ENCODE measurements at regions of chr7 and their contacts with region 1.

Region 1: DNA sequence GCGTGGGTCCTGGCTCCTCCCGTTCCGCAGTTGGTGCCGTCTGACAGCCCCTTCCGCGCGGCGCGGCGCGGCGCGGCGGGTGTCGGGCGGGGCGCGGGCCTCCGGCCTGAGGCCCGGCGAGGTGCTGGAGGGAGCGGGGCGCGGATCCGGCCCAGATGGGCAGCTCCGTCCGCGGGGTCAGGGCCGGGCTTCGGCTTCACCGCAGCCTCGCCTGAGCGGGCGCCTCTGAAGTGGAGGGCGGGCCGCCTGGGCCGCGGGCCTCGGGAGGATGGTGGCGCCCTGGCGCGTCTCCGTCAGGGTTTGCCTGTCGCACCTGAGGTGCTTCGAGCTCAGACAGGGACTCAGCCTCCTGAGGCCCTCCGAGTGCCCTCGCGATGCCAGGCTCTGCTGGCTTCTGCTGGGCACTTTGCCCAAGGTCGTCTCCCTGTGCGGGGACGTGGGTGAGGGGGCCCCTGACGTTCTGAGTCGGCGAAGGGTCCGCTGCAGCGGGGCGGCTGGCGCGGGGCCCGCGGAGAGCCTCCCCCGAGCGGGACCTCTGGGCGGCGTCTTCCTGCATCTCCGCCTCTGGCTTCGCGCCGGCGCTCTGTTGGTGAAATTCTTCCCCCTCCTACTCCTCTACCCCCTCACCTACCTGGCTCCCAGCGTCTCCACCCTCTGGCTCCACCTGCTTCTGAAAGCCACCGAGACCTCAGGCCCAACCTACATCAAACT is 473 bp downstream of the ADCK2 start:
- DNase-seq: no peak
- ATAC-seq: peak; percentile 62
- H3K4me3 ChIP-seq: peak overlapping the region; percentile 82
- H3K27ac ChIP-seq: peak overlapping the region; percentile 65
- H3K4me1 ChIP-seq: peaks cover 39% of the 10 kb centered on the region
- H3K27me3 ChIP-seq: no peaks in the 10 kb centered on the region
- CTCF ChIP-seq: 0 out of 6 replicates have a peak, but pooled peaks of 1 of the 3 experiments have one; percentile 2
- EP300 ChIP-seq: no peak
- POLR2A ChIP-seq: peak; percentile 31; the same call in 1 of the 2 replicates
- RAD21 ChIP-seq: no peak

Region 2: DNA sequence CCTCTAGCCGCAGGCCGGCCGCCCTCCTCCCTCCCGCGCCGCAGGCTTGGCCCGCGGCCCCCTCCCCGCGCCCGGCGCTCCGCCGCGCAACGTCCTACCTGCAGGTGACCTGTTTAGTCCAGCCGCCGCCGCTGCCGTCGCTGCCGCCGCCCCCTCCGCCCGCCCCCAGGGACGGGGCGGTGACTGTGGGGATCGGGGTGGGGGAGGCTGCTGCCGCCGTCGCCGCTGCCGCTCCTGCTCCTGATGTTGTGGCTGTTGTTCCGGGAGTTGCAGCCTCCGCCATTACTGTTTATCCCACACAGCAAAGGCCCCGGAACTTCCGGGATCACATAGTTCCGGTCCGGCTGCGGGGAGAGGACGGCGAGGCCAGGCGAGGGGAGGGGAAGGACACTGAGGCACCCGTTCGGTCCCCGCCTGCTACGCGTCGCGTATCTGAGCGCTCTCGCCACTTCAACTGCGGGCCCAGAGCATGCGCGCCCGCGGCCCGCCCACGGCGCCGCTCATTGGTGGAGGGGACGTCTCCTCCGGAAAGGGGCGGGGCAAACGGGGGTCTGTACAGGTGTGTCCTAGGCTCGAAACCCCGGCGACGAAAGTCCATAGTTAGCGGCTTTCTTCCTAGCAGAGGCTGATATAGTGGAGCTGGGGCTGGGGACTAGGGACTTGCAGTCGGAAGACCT is 194.0 kb before region 1 on chr7 and contains the start of gene MKRN1:
- CTCF ChIA-PET with region 1: interaction called, 21 read pairs
- POLR2A ChIA-PET with region 1: interaction called, 3 read pairs
- RAD21 ChIA-PET with region 1: interaction called, 7 read pairs
- SMC1A ChIA-PET with region 1: interaction called, 3 read pairs
- in situ Hi-C with region 1: no loop called
- intact Hi-C with region 1: no loop called
- DNase-seq: peak; percentile 83
- ATAC-seq: peak; percentile 96
- H3K4me3 ChIP-seq: peak within 1 kb of the TSS; percentile 98
- H3K27ac ChIP-seq: peak within 1 kb of the TSS; percentile 76
- H3K4me1 ChIP-seq: peaks cover 13% of the 10 kb centered on the region
- H3K27me3 ChIP-seq: no peaks in the 10 kb centered on the region; a peak in 1 of 4 replicates
- CTCF ChIP-seq: no peak
- EP300 ChIP-seq: no peak
- POLR2A ChIP-seq: peak; percentile 85
- RAD21 ChIP-seq: no peak
- polyA plus RNA-seq, gene MKRN1: 19.1 to 23.8 TPM

Region 3: GRCh38 chr7:140541513-140542227 is 131.5 kb before region 1 on chr7:
- CTCF ChIA-PET with region 1: no interaction called
- POLR2A ChIA-PET with region 1: no interaction called
- RAD21 ChIA-PET with region 1: no interaction called
- SMC1A ChIA-PET with region 1: no interaction called
- in situ Hi-C with region 1: no loop called
- intact Hi-C with region 1: no loop called
- DNase-seq: no peak
- ATAC-seq: no peak
- H3K4me3 ChIP-seq: no peak overlapping the region
- H3K27ac ChIP-seq: no peak overlapping the region
- H3K4me1 ChIP-seq: no peaks in the 10 kb centered on the region
- H3K27me3 ChIP-seq: peaks cover 0 to 3% of the 10 kb centered on the region in 2 experiments; a peak in 3 of 4 replicates
- CTCF ChIP-seq: no peak
- EP300 ChIP-seq: no peak
- POLR2A ChIP-seq: no peak
- RAD21 ChIP-seq: no peak

Region 4: DNA sequence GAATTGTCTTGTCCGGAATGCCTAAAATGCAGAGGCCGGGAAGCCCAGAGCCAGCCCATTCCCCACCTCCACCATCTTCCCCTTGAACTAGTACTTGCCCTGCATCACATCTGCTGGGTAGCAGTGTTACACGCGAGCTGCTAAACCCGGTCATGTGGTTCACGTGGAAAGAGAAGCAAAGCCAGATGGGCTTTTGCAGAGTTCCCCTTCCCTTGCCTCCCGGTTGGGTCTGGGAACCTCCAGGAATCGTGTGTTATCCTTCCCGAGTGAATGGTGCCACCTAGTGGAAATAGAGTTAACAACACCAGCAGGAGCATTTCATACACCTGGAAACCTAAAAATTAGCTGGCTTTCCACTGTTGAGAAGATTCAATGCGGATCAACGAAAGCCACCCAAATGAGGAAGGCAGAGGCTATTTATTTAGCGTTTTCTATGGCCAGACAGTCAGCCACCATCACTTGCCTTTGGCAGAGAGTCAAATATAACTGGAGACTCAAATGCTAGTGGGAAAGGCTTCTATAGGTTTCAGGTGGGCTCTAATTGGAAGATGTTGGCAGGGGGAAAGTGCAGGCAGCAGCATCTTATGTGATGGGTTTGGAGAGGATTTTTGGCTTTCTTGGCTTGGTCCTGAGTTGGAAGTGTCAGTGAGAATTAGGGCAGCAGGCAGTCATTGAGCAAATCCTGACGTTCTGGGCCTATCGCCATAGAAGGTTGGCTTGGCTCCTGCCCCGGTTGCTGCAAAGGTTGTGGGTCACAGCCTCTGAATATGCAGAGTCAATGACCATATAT is 19.7 kb before region 1 on chr7:
- CTCF ChIA-PET with region 1: interaction called, 21 read pairs
- POLR2A ChIA-PET with region 1: interaction called, 6 read pairs
- RAD21 ChIA-PET with region 1: interaction called, 4 read pairs
- SMC1A ChIA-PET with region 1: interaction called, 4 read pairs
- in situ Hi-C with region 1: no loop called
- intact Hi-C with region 1: no loop called
- DNase-seq: no peak
- ATAC-seq: peak; percentile 61
- H3K4me3 ChIP-seq: no peak overlapping the region
- H3K27ac ChIP-seq: no peak overlapping the region
- H3K4me1 ChIP-seq: peaks cover 12% of the 10 kb centered on the region
- H3K27me3 ChIP-seq: no peaks in the 10 kb centered on the region
- CTCF ChIP-seq: peak; percentile 79 to 88 (median 81)
- EP300 ChIP-seq: no peak
- POLR2A ChIP-seq: no peak
- RAD21 ChIP-seq: peak; percentile 90

Region 5: DNA sequence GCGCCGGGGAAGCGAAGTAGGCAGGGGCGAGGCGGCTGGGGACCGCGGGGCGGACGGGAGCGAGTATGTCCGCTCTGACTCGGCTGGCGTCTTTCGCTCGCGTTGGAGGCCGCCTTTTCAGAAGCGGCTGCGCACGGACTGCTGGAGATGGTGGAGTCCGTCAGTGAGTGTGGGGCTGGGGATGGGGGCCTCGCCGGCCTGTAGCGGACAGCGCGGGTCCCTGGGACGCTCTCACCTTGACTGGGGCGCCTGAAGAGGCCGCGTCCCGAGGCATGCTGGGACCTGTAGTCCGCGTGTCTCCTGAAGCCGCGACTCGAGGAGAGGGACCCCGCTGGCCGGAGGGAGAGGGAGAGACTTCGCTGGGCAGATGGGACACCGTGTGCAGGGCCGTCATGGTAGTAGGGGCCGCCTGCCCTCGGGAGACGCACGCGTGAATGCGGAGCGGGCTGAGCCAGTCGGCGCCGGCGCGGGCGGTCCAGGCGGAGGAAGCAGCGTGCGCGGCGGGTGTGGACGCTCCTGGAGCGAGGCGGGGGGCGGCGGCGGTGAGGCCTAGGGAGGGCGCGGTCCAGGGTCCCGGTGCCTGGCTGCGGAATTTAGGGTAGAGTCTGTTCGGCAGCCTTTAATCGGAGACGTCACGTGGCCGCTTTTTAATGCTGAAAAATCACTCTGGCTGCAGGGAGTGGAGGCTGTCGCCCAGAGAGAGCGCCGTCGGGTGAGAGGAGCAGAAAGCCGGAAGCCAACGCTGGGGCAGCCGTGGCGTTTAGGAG is 23.6 kb after region 1 on chr7 and contains the start of gene NDUFB2:
- CTCF ChIA-PET with region 1: interaction called, 25 read pairs
- POLR2A ChIA-PET with region 1: interaction called, 11 read pairs
- RAD21 ChIA-PET with region 1: interaction called, 12 read pairs
- SMC1A ChIA-PET with region 1: interaction called, 11 read pairs
- in situ Hi-C with region 1: no loop called
- intact Hi-C with region 1: loop called (anchors 1 kb)
- DNase-seq: peak; percentile 57
- ATAC-seq: peak; percentile 93
- H3K4me3 ChIP-seq: peak within 1 kb of the TSS; percentile 77
- H3K27ac ChIP-seq: peak within 1 kb of the TSS; percentile 90
- H3K4me1 ChIP-seq: peaks cover 11% of the 10 kb centered on the region
- H3K27me3 ChIP-seq: no peaks in the 10 kb centered on the region
- CTCF ChIP-seq: no peak
- EP300 ChIP-seq: no peak
- POLR2A ChIP-seq: peak; percentile 95
- RAD21 ChIP-seq: no peak
- polyA plus RNA-seq, gene NDUFB2: 1,189 to 1,236 TPM

Region 6: DNA sequence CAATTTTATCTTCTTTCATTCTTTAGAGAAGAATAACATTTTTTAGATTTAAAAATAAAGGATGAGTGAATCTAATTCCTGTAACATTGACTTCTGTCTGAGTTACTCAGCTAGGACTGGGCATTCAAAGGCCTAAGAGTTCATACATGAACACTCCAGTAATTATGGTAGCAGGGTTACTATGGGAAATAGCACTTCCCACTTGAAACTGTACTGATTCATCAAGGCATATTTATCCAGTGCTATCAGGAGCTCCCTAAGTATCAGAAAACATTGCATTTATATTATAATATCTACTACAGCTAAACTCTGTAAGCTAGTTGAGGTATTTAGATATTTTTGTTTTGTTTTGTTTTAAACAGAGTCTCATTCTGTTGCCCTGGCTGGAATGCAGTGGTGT is 65.1 kb after region 1 on chr7:
- CTCF ChIA-PET with region 1: interaction called, 16 read pairs
- POLR2A ChIA-PET with region 1: no interaction called
- RAD21 ChIA-PET with region 1: no interaction called
- SMC1A ChIA-PET with region 1: interaction called, 10 read pairs
- in situ Hi-C with region 1: no loop called
- intact Hi-C with region 1: no loop called
- DNase-seq: no peak
- ATAC-seq: no peak
- H3K4me3 ChIP-seq: no peak overlapping the region
- H3K27ac ChIP-seq: no peak overlapping the region
- H3K4me1 ChIP-seq: no peaks in the 10 kb centered on the region
- H3K27me3 ChIP-seq: no peaks in the 10 kb centered on the region
- CTCF ChIP-seq: no peak
- EP300 ChIP-seq: no peak
- POLR2A ChIP-seq: no peak
- RAD21 ChIP-seq: no peak

Region 7: DNA sequence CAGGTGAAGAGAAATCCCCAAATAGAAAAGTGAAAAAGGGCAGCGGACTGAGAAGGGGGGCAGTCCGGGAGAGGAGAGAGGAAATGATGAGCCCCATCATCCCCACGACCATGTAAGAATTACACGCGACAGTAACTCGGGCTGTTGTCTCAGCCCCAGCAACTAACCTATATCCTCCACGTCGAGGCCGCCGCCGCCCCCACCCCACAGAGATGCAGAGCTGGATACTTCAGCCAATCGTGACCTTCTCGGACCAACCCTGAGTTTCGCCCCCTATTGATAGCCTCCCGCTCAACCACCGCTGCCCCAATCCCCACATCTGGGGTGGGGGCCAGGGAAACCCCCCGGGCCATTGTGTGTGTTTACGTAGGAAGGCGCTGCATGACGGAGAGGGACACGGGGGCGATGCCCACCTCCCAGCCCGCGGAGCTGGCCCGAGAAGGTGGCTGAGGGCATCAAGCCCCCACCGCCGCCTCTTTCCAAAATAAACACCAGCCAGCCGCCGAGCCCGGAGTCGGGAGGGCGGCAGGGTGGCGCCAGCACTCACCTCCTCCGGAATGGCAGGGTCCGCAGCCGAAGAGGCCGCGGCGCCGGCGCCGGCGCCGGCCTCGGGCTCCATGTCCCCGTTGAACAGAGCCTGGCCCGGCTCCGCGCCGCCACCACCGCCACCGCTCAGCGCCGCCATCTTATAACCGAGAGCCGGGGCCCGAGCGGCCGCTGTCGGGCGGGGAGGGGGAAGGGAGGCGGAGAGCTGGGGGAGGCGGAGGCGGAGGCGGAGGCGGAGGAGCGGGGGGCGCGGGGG is 251.0 kb after region 1 on chr7:
- CTCF ChIA-PET with region 1: interaction called, 3 read pairs
- POLR2A ChIA-PET with region 1: interaction called, 3 read pairs
- RAD21 ChIA-PET with region 1: interaction called, 3 read pairs
- SMC1A ChIA-PET with region 1: no interaction called
- in situ Hi-C with region 1: no loop called
- intact Hi-C with region 1: loop called (anchors 5 kb)
- DNase-seq: peak; percentile 50
- ATAC-seq: peak; percentile 89
- H3K4me3 ChIP-seq: peak overlapping the region; percentile 98
- H3K27ac ChIP-seq: peak overlapping the region; percentile 94
- H3K4me1 ChIP-seq: no peaks in the 10 kb centered on the region
- H3K27me3 ChIP-seq: no peaks in the 10 kb centered on the region
- CTCF ChIP-seq: peak; percentile 44 to 60 (median 45)
- EP300 ChIP-seq: peak in 1 of 2 experiments; percentile 42; a peak in 1 of 4 replicates
- POLR2A ChIP-seq: peak; percentile 75
- RAD21 ChIP-seq: no peak

Region 8: GRCh38 chr7:140983802-140984201 is 310.6 kb after region 1 on chr7:
- CTCF ChIA-PET with region 1: interaction called, 3 read pairs
- POLR2A ChIA-PET with region 1: no interaction called
- RAD21 ChIA-PET with region 1: interaction called, 8 read pairs
- SMC1A ChIA-PET with region 1: interaction called, 11 read pairs
- in situ Hi-C with region 1: no loop called
- intact Hi-C with region 1: no loop called
- DNase-seq: no peak
- ATAC-seq: no peak
- H3K4me3 ChIP-seq: no peak overlapping the region
- H3K27ac ChIP-seq: no peak overlapping the region
- H3K4me1 ChIP-seq: no peaks in the 10 kb centered on the region
- H3K27me3 ChIP-seq: no peaks in the 10 kb centered on the region
- CTCF ChIP-seq: peak in 1 of 3 experiments; percentile 37; a peak in 2 of 6 replicates
- EP300 ChIP-seq: no peak
- POLR2A ChIP-seq: no peak
- RAD21 ChIP-seq: peak; percentile 53